Ovary (tissue), 10 donors: ENCODE measurements at regions of chr1 and their contacts with region 1.

Region 1: GRCh38 chr1:2412519-2413233 is at the start of gene PEX10:
- DNase-seq: peak; percentile 97 to 99 (median 98)
- H3K4me3 ChIP-seq: peak within 1 kb of the TSS; percentile 87
- H3K27ac ChIP-seq: peak within 1 kb of the TSS; percentile 76 to 85
- H3K4me1 ChIP-seq: peaks cover 6% of the 10 kb centered on the region
- H3K27me3 ChIP-seq: no peaks in the 10 kb centered on the region
- CTCF ChIP-seq: no peak
- EP300 ChIP-seq: no peak
- POLR2A ChIP-seq: no peak
- total RNA-seq, gene PEX10: 14.4 to 25.9 (median 23.0) TPM

Region 2: DNA sequence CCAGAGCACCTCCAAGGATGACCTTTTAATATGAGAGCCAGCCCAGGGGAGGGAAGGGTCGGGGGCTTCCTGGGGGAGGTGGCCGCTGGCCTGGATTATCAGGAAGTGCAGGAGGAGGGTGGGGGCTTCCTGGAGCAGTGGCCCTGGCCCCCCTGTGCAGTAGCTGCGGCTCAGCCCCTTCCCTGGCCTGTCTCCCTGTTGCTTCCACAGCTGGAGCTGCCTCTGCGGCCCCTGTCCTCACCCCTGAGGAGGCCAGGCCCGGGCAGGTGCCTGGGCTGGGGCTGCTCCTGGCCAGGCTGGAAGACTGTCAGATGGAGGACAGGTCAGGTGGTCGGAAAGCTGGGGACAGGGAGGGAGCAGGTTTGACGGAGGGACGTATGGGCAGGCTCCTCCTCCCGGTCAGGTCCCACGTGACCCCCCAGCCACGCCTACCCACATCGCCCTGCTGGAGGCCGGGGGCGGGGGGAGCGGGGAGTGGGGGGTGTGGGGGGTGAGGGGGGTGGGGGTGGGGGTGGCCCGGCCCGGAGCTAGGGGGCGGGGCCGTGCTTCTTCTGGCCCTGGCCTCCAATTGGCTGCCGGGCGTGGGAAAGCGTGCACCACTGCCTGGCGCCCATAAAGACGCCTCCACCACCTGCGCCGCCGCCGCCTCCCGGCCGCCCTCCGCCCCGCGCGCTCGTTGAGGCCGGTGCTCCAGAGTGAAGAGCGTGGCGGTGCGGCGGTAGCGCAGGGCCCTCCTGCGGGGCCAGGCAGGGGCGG is 133.3 kb after region 1 on chr1:
- intact Hi-C with region 1: loop called (anchors 1 to 5 kb)
- DNase-seq: peak in 3 of 5 donors; percentile 58 to 76 (median 76)
- H3K4me3 ChIP-seq: peak overlapping the region; percentile 37
- H3K27ac ChIP-seq: peak overlapping the region in 1 of 2 donors; percentile 29
- H3K4me1 ChIP-seq: peaks cover 21% of the 10 kb centered on the region
- H3K27me3 ChIP-seq: no peaks in the 10 kb centered on the region
- CTCF ChIP-seq: no peak
- EP300 ChIP-seq: no peak
- POLR2A ChIP-seq: no peak

Region 3: DNA sequence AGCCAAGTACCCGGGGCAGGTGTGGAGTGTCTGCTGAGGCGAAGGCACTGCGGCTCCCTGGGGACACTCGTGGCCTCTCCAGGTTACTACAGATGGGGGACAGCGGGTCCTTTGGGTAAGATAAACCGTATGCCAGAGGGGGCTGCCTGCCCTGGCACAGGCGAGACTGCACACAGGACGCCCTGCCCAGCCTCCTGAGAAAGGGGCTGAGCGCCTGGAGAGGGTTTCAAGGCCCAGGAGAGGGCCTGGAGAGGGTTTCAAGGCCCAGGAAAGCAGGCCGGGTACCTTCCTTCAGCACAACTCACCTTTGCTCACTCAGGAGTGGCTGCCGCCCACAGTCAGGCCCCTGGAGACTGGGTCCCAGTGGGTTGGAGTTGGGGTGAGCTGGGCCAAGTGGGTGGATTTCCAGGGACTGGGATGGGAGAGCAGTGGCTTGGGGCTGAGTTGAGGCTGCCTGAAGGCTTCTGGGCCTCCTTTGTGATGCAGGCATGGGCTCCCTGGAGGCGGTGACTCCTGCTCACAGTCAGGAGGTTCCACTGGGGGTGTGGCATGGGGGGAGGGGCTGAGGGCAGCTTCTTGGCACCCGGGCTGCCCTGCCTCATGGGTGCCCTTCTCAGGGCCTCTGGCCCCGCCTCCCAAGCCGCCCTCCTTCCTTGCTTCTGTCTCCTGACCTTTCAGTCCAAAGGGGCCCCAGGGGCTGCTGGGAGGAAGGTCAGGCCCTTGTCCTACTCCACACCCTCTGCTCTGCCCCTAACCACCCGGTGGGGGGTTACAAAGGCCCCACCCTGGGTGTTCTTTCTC is 220.1 kb after region 1 on chr1 and contains the start of gene MMEL1:
- intact Hi-C with region 1: loop called in 1 of 4 experiments (anchors 10 kb)
- DNase-seq: peak in 1 of 5 donors; percentile 13
- H3K4me3 ChIP-seq: no peak within 1 kb of the TSS
- H3K27ac ChIP-seq: no peak within 1 kb of the TSS
- H3K4me1 ChIP-seq: peaks cover 15% of the 10 kb centered on the region
- H3K27me3 ChIP-seq: peaks cover 2% of the 10 kb centered on the region
- CTCF ChIP-seq: no peak
- EP300 ChIP-seq: no peak
- POLR2A ChIP-seq: no peak
- total RNA-seq, gene MMEL1: 0.45 to 7.9 (median 1.1) TPM in 4 of 7 donors, not detected in the others

Region 4: GRCh38 chr1:3423245-3423829 is 1010.7 kb after region 1 on chr1:
- intact Hi-C with region 1: loop called (anchors 5 to 10 kb)
- DNase-seq: no peak
- H3K4me3 ChIP-seq: no peak overlapping the region
- H3K27ac ChIP-seq: no peak overlapping the region
- H3K4me1 ChIP-seq: no peaks in the 10 kb centered on the region
- H3K27me3 ChIP-seq: no peaks in the 10 kb centered on the region
- CTCF ChIP-seq: no peak
- EP300 ChIP-seq: no peak
- POLR2A ChIP-seq: no peak

Region 5: DNA sequence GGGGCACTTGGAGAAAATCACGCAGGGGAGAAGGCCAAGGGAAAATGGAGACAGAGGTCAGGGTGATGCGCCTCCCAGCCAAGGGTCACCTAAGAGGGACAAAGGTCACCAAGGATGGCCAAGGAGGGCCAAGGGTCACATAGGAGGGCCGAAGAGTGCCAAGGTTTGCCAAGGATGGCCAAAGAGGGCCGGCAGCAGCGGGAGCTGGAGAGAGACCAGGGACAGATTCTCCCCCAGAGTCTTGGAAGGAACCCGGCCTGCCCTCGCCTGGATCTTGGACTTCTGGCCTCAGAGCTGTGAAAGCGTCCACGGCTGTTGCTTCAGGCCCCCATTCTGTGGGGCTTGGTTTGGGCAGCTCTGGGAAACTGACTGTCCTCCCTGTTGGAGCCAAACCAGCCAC is 1016.2 kb after region 1 on chr1:
- intact Hi-C with region 1: loop called (anchors 5 to 10 kb)
- DNase-seq: no peak
- H3K4me3 ChIP-seq: no peak overlapping the region
- H3K27ac ChIP-seq: no peak overlapping the region
- H3K4me1 ChIP-seq: no peaks in the 10 kb centered on the region
- H3K27me3 ChIP-seq: no peaks in the 10 kb centered on the region
- CTCF ChIP-seq: no peak
- EP300 ChIP-seq: no peak
- POLR2A ChIP-seq: no peak